ENCODE measurements at regions of chr1 and their contacts with region 1.

Region 1: DNA sequence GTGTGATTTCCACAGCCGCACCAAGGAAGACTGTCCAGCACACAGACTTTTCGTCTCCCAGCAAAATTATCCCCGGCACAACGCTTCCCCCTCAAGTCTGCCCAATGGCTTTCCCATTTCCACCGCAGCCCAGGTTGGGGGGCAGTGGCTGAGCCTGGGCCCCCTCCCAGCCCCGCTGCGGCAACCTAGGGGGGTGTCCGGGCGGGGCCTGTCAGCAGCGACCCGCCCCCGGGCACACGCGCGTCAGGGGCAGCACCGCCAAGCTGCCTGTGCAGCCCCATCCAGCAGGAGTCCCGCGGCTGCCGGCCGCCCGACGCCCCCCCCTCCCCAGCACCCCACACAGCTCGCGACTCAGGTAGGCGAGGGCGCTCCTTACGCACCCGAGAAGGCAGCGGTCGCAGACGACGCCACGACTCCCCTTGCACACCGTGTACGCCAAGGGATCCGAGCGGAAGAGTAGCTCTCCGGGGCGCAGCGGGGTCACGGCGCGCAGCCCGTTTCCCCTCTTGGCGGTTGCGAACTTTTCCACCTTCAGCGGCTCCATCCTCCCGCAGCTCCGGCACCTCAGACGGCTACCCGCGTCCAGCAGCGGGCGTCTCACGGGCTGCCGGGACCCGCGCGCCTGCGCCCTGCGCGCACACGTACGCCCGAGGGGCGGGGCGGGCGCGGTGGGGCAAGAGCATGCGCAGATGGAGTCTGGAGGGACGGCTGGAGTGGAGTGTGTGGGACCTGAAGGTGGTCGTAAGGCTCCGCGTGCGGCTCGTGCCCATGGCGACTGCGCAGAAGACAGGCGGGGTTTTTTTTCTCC is at the start of gene SMYD3:
- DNase-seq: peak; percentile 63 to 76 (median 71)
- H3K4me3 ChIP-seq: peak within 1 kb of the TSS; percentile 23 to 90 (median 74)
- H3K27ac ChIP-seq: peak within 1 kb of the TSS in 1 of 5 donors; percentile 27
- H3K4me1 ChIP-seq: peaks cover 0 to 9% of the 10 kb centered on the region in 2 donors
- H3K27me3 ChIP-seq: no peaks in the 10 kb centered on the region
- CTCF ChIP-seq: peak in 1 of 6 experiments; percentile 16
- POLR2A ChIP-seq: peak in 1 of 2 donors; percentile 16
- total RNA-seq, gene SMYD3: 13.5 to 78.2 (median 27.9) TPM

Region 2: GRCh38 chr1:246203180-246203579 is 303.7 kb before region 1 on chr1:
- intact Hi-C with region 1: no loop called
- DNase-seq: no peak
- H3K4me3 ChIP-seq: no peak overlapping the region
- H3K27ac ChIP-seq: no peak overlapping the region
- H3K4me1 ChIP-seq: peaks cover 0 to 5% of the 10 kb centered on the region in 2 donors
- H3K27me3 ChIP-seq: no peaks in the 10 kb centered on the region
- CTCF ChIP-seq: no peak
- POLR2A ChIP-seq: no peak

Region 3: GRCh38 chr1:246608616-246609376 is 101.9 kb after region 1 on chr1:
- intact Hi-C with region 1: no loop called
- DNase-seq: peak; percentile 51 to 80 (median 73)
- H3K4me3 ChIP-seq: peak overlapping the region in 1 of 4 donors; percentile 10
- H3K27ac ChIP-seq: peak overlapping the region; percentile 26 to 81 (median 51)
- H3K4me1 ChIP-seq: peaks cover 36 to 41% of the 10 kb centered on the region in 2 donors
- H3K27me3 ChIP-seq: no peaks in the 10 kb centered on the region
- CTCF ChIP-seq: peak in 2 of 6 experiments; percentile 17 to 24
- POLR2A ChIP-seq: peak in 1 of 2 donors; percentile 10

Region 4: DNA sequence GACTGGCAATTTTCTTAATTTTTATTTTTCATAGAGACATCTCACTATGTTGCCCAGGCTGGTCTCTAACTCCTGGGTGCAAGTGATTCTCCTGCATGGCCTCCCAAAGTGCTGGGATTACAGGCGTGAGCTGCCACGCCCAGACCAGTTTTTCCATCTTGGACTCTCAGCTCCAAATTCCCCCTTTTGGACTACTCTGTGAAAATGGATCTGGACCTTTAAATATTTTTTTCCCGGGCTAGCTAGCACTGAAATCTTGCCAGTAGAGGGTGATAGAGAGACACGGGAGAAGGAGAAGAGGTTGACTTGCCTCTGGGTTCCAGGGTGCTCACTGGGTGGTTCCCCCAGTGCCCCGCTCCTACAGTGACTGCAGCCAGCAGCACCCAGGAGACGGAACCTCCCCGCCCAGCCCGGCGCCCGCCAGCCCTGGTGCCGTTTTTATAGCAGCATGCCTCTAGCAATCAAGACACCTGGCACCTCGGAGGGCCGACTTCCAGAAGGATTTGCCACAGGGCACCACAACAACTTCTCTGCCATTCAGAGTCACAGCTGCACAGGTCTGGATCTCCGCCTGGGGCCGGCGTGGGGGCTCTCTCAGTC is 182.6 kb after region 1 on chr1:
- intact Hi-C with region 1: loop called in 1 of 2 experiments (anchors 10 kb)
- DNase-seq: peak; percentile 57 to 78 (median 66)
- H3K4me3 ChIP-seq: peak overlapping the region in 1 of 4 donors; percentile 42
- H3K27ac ChIP-seq: no peak overlapping the region
- H3K4me1 ChIP-seq: peaks cover 0 to 9% of the 10 kb centered on the region in 2 donors
- H3K27me3 ChIP-seq: no peaks in the 10 kb centered on the region
- CTCF ChIP-seq: peak; percentile 68 to 84 (median 78)
- POLR2A ChIP-seq: no peak

Region 5: DNA sequence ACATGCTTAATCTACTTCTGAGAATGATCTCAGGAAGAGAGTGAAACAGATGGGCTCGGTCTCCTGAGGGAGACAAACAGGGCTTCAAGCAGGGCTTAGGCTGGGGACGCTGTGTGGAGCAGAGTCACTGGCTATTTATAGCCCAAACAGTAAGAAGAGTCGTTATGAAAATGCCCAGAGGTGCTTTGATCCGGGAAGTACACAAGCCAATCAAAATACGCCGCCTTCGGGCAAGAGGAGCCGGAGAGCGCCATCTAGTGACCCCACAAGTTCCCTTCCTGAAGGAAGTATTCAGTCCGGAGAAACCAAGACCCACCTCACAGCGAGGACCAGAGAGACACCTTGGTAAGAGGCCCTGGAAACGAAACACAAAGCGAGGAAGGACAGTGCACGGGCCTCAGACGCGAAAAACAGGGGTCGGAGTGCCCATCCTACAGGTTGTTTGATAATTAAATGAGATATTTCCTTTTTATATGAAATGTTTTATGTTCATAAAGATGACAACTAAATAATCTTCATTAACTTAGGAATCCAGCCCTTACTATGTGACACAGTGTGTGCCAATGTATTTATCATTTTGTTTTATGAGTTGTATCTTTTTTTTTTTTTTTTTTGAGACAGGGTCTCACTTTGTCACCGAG is 192.3 kb after region 1 on chr1:
- intact Hi-C with region 1: loop called in 1 of 2 experiments (anchors 5 kb)
- DNase-seq: peak; percentile 88 to 96 (median 91)
- H3K4me3 ChIP-seq: peak overlapping the region in 1 of 4 donors; percentile 48
- H3K27ac ChIP-seq: peak overlapping the region in 3 of 5 donors; percentile 35 to 46 (median 45)
- H3K4me1 ChIP-seq: peaks cover 3 to 7% of the 10 kb centered on the region in 2 donors
- H3K27me3 ChIP-seq: no peaks in the 10 kb centered on the region
- CTCF ChIP-seq: peak; percentile 76 to 87 (median 83)
- POLR2A ChIP-seq: peak in 1 of 2 donors; percentile 49

Region 6: GRCh38 chr1:246827392-246827791 is 320.5 kb after region 1 on chr1:
- intact Hi-C with region 1: no loop called
- DNase-seq: no peak
- H3K4me3 ChIP-seq: no peak overlapping the region
- H3K27ac ChIP-seq: no peak overlapping the region
- H3K4me1 ChIP-seq: no peaks in the 10 kb centered on the region
- H3K27me3 ChIP-seq: no peaks in the 10 kb centered on the region
- CTCF ChIP-seq: no peak
- POLR2A ChIP-seq: no peak